HEK293T (cell line): ENCODE measurements at regions of chr1 and their contacts with region 1.

Region 1: GRCh38 chr1:19582302-19582701 is 61.8 kb upstream of the NBL1 start:
- DNase-seq: peak; percentile 52

Region 2: DNA sequence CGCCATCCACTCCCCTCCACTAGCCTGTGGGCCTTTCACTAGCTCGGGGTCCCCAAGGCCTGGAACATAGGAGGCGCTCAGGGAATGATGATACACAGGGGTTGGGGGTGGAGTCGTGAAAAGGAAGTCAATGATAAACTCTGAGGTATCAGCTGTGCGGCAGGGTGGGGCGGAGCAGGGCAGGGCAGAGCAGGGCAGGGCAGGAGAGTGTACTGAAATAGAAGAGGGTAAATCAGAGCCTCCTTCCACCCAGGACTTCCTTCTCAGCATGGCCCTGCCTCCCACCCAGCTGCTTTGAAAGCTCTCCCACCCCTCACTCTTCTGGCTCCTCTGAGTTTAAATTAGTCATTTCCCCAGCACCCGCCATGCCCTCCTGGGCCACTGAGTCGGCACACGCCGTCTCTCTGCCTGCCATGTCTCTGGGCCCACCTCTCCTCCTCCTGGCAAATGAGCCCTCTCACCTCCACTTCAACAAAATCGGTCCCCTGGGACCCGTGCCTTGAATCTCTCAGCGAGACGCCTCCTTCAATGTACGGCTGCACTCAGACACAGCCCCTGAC is 113.8 kb before region 1 on chr1:
- CTCF ChIA-PET with region 1: no interaction called
- POLR2A ChIA-PET with region 1: no interaction called
- DNase-seq: no peak

Region 3: DNA sequence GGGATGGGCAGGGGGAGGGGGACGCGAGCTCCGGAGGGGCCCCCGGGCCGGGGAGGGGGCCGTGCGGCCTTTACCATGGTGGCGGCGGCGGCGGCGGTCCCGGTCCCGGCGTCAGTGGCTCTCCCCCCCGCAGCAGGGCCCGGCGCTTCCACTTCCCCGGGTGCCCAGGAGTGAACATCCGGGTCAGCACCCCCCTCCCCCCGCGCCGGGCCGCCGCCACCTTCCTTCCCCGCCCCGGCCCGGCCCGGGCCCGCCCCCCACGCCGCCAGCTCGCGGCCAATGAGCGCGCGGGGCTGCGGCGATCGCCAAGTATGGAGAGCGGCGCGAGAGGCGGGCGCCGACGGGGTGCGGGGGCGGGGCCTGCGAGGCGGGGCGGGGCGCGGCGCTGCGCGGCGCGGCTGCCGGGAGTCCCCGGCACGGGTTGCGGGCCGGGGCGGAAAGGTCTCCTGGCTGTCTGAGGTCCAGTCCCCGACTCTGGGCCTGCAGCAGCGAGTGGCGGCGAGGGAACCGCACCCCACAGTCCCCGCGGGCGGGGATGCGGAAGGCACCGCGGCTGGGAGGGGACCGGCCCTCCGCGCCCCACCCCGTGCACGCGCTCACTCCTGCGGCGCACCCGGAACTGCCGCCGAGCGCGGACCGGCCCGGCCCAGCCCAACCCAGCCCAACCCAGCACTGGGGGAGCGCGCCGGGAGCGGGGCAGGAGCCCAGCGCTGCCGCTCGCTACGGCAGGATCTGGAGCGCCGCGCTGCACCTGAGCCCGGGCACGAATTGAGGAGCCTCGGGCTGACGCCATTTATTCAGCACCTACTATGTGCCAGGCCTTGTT is 96.7 kb before region 1 on chr1 and contains the start of gene CAPZB:
- CTCF ChIA-PET with region 1: interaction called, 11 read pairs
- POLR2A ChIA-PET with region 1: no interaction called
- DNase-seq: peak; percentile 93

Region 4: GRCh38 chr1:19567041-19567440 is 15.3 kb before region 1 on chr1:
- CTCF ChIA-PET with region 1: no interaction called
- POLR2A ChIA-PET with region 1: no interaction called
- DNase-seq: no peak

Region 5: DNA sequence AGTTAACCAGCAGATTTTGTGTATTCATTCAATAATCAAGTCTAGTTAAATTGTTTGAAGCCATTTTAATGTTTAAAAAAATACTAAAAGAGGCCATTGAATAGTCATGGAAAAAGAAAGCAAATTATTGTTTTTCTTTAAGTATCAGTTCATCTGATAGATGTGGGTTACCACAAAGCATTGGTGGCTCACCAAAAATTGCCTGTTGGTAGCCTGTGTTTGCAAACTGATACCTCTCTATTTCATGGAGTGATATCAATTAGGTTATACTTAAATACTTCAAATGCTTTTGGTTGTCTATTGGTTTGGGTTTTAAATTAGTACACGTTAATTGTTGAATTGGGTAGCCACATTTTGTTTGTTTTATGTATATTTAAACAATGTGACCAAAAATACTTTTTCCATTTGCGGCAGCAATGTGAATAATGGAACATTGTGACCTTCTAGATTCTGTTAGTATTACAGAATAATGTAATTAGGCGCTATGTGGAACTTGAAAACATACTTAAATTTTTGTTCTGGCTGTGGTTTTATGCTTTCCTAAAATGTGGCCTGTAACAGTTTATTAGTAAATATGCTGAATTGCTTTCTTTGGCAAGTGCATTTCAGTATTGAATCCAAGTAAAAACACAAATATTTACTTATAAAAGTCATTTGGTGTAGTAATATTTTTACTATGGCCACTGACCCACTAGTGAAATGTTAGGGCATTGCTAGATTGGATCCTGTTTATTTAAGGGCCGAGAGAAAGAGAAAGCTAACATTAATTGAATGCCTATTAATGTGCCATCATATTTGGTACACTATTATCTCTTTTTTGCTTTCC is 24.7 kb after region 1 on chr1:
- CTCF ChIA-PET with region 1: no interaction called
- POLR2A ChIA-PET with region 1: no interaction called
- DNase-seq: no peak

Region 6: GRCh38 chr1:19620786-19621185 is 38.5 kb after region 1 on chr1:
- CTCF ChIA-PET with region 1: no interaction called
- POLR2A ChIA-PET with region 1: no interaction called
- DNase-seq: no peak